Panc1 (cell line): ENCODE measurements at regions of chr16 and their contacts with region 1.

Region 1: DNA sequence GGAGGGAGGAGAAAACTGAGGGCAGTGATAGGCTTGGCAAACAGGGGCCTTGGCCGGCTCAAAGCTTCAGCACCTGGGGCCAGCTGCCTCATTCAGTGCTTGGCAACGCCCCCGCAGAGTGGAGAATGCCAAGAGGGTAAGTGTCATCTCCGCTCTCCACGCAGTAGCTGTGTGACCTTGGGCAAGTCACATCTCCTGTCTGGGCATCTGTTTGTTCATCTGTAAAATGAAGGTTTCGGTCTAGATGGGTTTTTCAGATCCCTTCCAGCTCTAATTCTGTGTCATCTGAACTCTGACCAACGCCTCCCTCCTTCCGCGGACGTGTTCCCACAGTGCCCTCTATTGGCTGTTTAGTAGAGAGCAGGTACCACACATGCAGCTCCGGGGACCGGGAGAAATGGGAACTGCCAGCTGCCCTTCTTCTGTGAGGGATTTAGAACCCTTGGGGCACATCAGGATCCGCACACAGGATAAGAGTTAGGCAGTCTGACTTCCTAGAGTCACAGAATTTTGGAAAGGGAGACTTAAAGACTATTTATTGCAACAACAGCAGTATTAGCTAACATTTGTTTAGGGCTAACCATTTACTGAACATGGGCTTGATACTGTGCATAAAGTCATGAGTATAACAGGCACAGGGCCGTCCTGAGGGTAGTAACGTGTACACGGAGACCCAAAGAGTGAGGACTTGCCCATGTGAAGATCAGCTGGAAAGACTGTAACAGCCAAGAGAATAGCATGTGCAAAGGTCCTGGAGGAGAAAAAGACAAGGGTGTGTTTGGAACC is 26.8 kb downstream of the GP2 start:
- DNase-seq: peak; percentile 43
- ATAC-seq: peak; percentile 97
- H3K4me3 ChIP-seq: no peak overlapping the region
- H3K27ac ChIP-seq: no peak overlapping the region
- H3K4me1 ChIP-seq: peaks cover 3% of the 10 kb centered on the region; the same call in 1 of the 2 replicates
- H3K27me3 ChIP-seq: peaks cover 21% of the 10 kb centered on the region
- CTCF ChIP-seq: peak; percentile 95

Region 2: GRCh38 chr16:19898924-19899604 is 401.4 kb before region 1 on chr16:
- CTCF ChIA-PET with region 1: interaction called, 13 read pairs
- POLR2A ChIA-PET with region 1: no interaction called
- in situ Hi-C with region 1: no loop called
- intact Hi-C with region 1: no loop called
- DNase-seq: peak; percentile 74
- ATAC-seq: peak; percentile 87
- H3K4me3 ChIP-seq: no peak overlapping the region
- H3K27ac ChIP-seq: no peak overlapping the region
- H3K4me1 ChIP-seq: no peaks in the 10 kb centered on the region
- H3K27me3 ChIP-seq: no peaks in the 10 kb centered on the region; the same call in 1 of the 2 replicates
- CTCF ChIP-seq: peak; percentile 95

Region 3: DNA sequence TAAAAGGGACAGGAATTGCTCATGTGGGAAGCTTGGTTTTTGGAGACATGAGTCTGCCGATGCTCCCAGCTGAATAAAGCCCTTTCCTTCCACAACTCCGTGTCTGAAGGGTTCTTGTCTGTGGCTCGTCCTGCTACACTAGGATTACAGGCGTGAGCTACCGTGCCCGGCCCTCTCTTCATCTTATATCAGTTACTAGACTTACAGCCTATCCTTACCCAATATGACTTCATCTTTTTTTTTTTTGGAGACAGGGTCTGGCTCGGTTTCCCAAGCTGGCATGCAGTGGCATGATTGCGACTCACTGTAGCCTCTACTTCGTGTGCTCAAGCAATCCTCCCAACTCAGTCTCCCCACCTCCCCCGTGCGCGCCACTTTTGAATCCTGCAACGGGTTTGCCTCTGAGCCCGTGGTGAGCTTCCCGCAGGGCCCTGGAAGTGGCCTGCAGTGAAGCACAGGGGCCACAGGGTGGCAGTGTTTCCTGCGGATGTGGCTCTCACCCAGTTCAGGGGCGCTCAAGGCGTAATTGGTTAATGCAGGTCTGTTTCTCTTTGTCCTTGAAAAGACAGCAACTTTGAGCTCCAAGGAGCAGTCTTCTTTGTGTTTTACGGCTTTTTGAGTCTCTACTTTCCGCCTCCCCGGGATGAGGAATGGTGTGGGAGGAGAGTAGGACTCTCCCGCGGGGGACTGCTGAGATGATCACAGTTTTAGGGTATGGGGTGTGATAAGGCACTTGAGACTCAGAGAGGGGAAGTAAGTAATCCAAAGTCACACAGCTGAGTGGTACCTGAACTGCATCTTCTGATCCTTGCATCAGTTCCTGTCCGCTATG is 393.1 kb before region 1 on chr16:
- CTCF ChIA-PET with region 1: interaction called, 93 read pairs
- POLR2A ChIA-PET with region 1: no interaction called
- in situ Hi-C with region 1: no loop called
- intact Hi-C with region 1: loop called (anchors 1 kb)
- DNase-seq: peak; percentile 65
- ATAC-seq: peak; percentile 99
- H3K4me3 ChIP-seq: no peak overlapping the region
- H3K27ac ChIP-seq: no peak overlapping the region
- H3K4me1 ChIP-seq: no peaks in the 10 kb centered on the region
- H3K27me3 ChIP-seq: no peaks in the 10 kb centered on the region
- CTCF ChIP-seq: peak; percentile 98

Region 4: GRCh38 chr16:19912455-19913339 is 387.8 kb before region 1 on chr16:
- CTCF ChIA-PET with region 1: interaction called, 93 read pairs
- POLR2A ChIA-PET with region 1: no interaction called
- in situ Hi-C with region 1: no loop called
- intact Hi-C with region 1: loop called (anchors 1 kb)
- DNase-seq: no peak
- ATAC-seq: peak; percentile 61
- H3K4me3 ChIP-seq: no peak overlapping the region
- H3K27ac ChIP-seq: no peak overlapping the region
- H3K4me1 ChIP-seq: no peaks in the 10 kb centered on the region
- H3K27me3 ChIP-seq: no peaks in the 10 kb centered on the region
- CTCF ChIP-seq: no peak